ENCODE measurements at regions of chr3 and their contacts with region 1.

Region 1: DNA sequence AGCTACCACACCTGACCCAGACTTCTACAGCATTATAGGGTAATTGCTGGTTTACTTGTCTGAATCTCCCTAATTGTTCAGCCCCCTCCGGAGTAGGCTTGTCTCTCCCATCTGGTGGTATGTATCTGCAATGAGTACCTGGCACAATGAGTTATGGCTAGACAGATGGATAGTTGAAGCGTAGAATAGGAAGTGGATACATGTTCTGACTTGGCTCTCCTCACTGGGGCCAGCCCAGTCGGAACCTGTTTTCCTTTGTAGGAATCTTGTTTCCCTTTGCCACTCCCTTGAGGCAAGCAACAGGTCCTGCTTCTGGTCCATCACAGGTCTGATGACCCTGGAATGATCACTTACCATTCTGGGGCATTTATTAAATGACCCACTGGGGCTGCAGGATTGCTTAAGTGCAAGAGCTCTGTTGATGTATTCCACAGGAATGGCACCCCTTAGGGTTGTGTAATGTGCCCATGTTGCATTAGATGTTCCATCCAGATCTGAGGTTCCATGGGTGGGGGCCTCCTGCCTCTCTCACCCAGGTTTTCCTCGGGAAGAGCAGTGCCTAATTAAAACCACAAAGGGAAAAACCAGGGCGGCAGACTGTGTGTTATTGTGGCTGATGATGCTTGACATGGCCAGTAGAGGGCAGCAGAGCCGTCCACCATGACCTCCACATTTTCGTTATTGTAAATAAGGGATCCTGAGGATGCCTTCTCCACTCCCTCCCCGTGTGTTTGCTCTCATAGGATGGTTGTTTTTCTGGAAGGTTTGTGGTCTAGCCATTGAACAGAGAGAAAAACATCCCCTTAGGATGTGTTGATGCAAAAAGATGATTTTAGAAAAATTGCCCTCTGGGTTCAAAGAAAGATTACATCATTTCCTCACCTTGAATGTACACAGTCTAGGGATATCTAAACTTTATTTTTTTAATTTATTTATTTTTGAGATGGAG is 58.0 kb downstream of the CMTM8 start:
- DNase-seq: peak; percentile 42 to 62 (median 61)
- ATAC-seq: peak; percentile 45 to 86 (median 84)
- H3K4me3 ChIP-seq: no peak overlapping the region
- H3K27ac ChIP-seq: no peak overlapping the region
- H3K4me1 ChIP-seq: peaks cover 0 to 13% (median 3%) of the 10 kb centered on the region in 12 donors
- H3K27me3 ChIP-seq: no peaks in the 10 kb centered on the region
- CTCF ChIP-seq: peak; percentile 80 to 92 (median 87)
- POLR2A ChIP-seq: no peak

Region 2: GRCh38 chr3:32184187-32184730 is 112.3 kb before region 1 on chr3:
- intact Hi-C with region 1: loop called in 5 of 10 experiments (anchors 5 to 10 kb)
- DNase-seq: no peak
- ATAC-seq: no peak
- H3K4me3 ChIP-seq: no peak overlapping the region
- H3K27ac ChIP-seq: no peak overlapping the region
- H3K4me1 ChIP-seq: no peaks in the 10 kb centered on the region
- H3K27me3 ChIP-seq: no peaks in the 10 kb centered on the region
- CTCF ChIP-seq: no peak
- POLR2A ChIP-seq: no peak

Region 3: DNA sequence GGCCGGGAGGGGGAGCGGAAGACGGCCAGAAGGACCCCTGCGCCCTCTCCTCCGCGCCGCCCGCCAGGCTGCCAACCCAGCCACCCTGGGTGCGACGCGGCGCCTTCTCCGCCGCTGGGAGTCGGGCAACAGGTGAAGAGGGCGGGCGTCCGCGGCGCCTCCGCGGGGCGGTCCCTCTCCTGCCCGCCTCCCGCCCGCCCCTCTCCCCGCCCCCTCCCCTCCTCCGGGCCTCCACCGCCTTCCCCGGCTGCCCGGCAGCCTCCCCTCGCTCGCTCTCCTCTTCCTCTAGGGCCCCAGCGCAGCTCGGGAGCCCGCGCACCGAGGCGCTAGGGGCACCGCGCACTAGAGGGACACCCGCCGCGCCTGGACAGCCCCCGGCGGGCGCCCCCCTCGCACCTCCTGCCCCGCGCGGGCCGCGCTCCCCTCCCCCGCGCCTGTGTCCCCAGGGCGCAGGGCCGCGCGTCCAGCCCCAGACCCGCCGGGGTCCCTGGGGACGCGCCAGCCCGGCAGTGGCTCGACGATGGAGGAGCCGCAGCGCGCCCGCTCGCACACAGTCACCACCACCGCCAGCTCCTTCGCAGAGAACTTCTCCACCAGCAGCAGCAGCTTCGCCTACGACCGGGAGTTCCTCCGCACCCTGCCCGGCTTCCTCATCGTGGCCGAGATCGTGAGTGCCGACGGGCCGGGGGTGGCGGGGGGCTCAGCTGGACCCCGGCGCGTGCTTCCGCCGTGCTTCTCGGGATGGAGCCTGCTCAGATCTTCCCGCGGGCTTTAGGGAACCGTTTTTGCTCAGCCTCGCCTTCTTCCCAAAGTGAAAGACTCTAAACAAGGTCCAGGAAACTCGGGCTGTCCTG is 57.9 kb before region 1 on chr3 and contains the start of gene CMTM8:
- intact Hi-C with region 1: loop called in 1 of 10 experiments (anchors 5 kb)
- DNase-seq: peak; percentile 52 to 73 (median 61)
- ATAC-seq: peak; percentile 27 to 87 (median 80)
- H3K4me3 ChIP-seq: peak within 1 kb of the TSS; percentile 50 to 95 (median 72)
- H3K27ac ChIP-seq: peak within 1 kb of the TSS; percentile 53 to 92 (median 83)
- H3K4me1 ChIP-seq: peaks cover 0 to 24% (median 8%) of the 10 kb centered on the region in 12 donors
- H3K27me3 ChIP-seq: peaks cover 0 to 14% (median 0%) of the 10 kb centered on the region in 9 donors
- CTCF ChIP-seq: no peak
- POLR2A ChIP-seq: no peak
- total RNA-seq, gene CMTM8: 1.7 to 12.1 (median 3.5) TPM

Region 4: GRCh38 chr3:32313723-32314473 is 17.4 kb after region 1 on chr3:
- intact Hi-C with region 1: no loop called
- DNase-seq: no peak
- ATAC-seq: peak in 3 of 4 donors; percentile 28 to 57 (median 44)
- H3K4me3 ChIP-seq: no peak overlapping the region
- H3K27ac ChIP-seq: peak overlapping the region in 1 of 12 donors; percentile 8
- H3K4me1 ChIP-seq: peaks cover 0 to 31% (median 17%) of the 10 kb centered on the region in 12 donors
- H3K27me3 ChIP-seq: no peaks in the 10 kb centered on the region
- CTCF ChIP-seq: no peak
- POLR2A ChIP-seq: no peak

Region 5: DNA sequence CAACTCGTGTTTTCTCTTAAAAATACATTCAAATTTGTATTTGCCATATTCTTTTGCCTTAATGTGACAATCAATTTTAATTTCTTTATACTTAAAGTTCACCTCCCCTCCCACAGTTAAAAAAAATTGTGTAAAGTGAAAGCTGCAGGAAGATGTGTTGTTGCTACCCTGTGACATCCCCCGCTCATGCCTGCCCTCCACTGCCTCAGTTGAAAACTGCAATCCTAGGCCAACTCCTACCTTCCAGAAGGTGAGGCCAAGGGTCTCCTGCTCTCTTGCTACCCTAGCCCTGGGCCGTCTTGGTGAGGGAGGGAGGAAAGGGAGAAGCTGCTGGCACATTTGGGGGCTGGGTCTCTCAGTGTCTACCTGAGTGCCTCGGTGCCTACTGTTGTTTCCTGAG is 38.1 kb after region 1 on chr3:
- intact Hi-C with region 1: loop called in 4 of 10 experiments (anchors 2 to 5 kb)
- DNase-seq: no peak
- ATAC-seq: no peak
- H3K4me3 ChIP-seq: no peak overlapping the region
- H3K27ac ChIP-seq: no peak overlapping the region
- H3K4me1 ChIP-seq: peaks cover 0 to 16% (median 0%) of the 10 kb centered on the region in 12 donors
- H3K27me3 ChIP-seq: no peaks in the 10 kb centered on the region
- CTCF ChIP-seq: no peak
- POLR2A ChIP-seq: no peak

Region 6: DNA sequence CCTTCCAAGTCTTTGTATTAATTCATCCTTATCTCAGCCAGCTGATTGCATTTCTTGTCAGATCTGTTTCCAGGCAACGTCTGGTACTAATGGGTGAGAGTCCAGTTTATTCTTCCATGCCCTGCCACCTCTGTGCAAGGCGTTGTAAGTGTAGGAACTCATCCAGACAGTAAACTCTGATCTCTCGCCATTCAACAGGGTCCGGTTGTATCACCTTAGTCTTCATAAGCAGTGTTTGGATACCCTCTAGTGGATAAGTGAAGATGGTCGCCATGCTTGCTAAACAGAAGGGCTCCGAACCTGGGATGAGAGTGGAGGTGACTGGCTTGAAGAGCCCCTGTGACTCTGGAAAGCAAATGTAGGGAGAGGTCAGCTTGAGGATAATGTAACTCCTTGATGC is 43.5 kb after region 1 on chr3:
- intact Hi-C with region 1: loop called in 9 of 10 experiments (anchors 2 to 10 kb)
- DNase-seq: no peak
- ATAC-seq: peak; percentile 55 to 90 (median 84)
- H3K4me3 ChIP-seq: no peak overlapping the region
- H3K27ac ChIP-seq: no peak overlapping the region
- H3K4me1 ChIP-seq: peaks cover 0 to 14% (median 0%) of the 10 kb centered on the region in 12 donors
- H3K27me3 ChIP-seq: no peaks in the 10 kb centered on the region
- CTCF ChIP-seq: peak in 11 of 12 donors; percentile 34 to 67 (median 54)
- POLR2A ChIP-seq: no peak

Region 7: GRCh38 chr3:32391643-32392535 is 95.4 kb after region 1 on chr3 and contains the start of gene CMTM7:
- intact Hi-C with region 1: loop called in 4 of 10 experiments (anchors 10 kb)
- DNase-seq: peak; percentile 73 to 87 (median 75)
- ATAC-seq: peak; percentile 60 to 94 (median 87)
- H3K4me3 ChIP-seq: peak within 1 kb of the TSS; percentile 51 to 98 (median 77)
- H3K27ac ChIP-seq: peak within 1 kb of the TSS; percentile 14 to 95 (median 84)
- H3K4me1 ChIP-seq: peaks cover 0 to 43% (median 9%) of the 10 kb centered on the region in 12 donors
- H3K27me3 ChIP-seq: no peaks in the 10 kb centered on the region
- CTCF ChIP-seq: no peak
- POLR2A ChIP-seq: peak in 1 of 2 donors; percentile 67
- total RNA-seq, gene CMTM7: 2.3 to 16.8 (median 3.6) TPM

Region 8: GRCh38 chr3:32467333-32468070 is 171.0 kb after region 1 on chr3:
- intact Hi-C with region 1: loop called in 9 of 10 experiments (anchors 2 to 10 kb)
- DNase-seq: peak; percentile 59 to 89 (median 68)
- ATAC-seq: peak; percentile 40 to 94 (median 88)
- H3K4me3 ChIP-seq: peak overlapping the region in 10 of 12 donors; percentile 25 to 57 (median 46)
- H3K27ac ChIP-seq: peak overlapping the region in 2 of 12 donors; percentile 35 to 51
- H3K4me1 ChIP-seq: peaks cover 0 to 36% (median 9%) of the 10 kb centered on the region in 12 donors
- H3K27me3 ChIP-seq: no peaks in the 10 kb centered on the region
- CTCF ChIP-seq: peak; percentile 98 to 100 (median 99)
- POLR2A ChIP-seq: peak in 1 of 2 donors; percentile 15